ENCODE measurements at regions of chr14 and their contacts with region 1.

Region 1: GRCh38 chr14:34906287-34906686 is 31.1 kb upstream of the BAZ1A start:
- DNase-seq: no peak
- ATAC-seq: no peak
- H3K4me3 ChIP-seq: no peak overlapping the region
- H3K27ac ChIP-seq: no peak overlapping the region
- H3K4me1 ChIP-seq: no peaks in the 10 kb centered on the region
- H3K27me3 ChIP-seq: no peaks in the 10 kb centered on the region
- CTCF ChIP-seq: no peak

Region 2: GRCh38 chr14:34678306-34678705 is 228.0 kb before region 1 on chr14:
- CTCF ChIA-PET with region 1: interaction called, 11 read pairs
- POLR2A ChIA-PET with region 1: no interaction called
- in situ Hi-C with region 1: no loop called
- intact Hi-C with region 1: no loop called
- DNase-seq: no peak
- ATAC-seq: peak; percentile 33; the same call in 1 of the 2 replicates
- H3K4me3 ChIP-seq: peak overlapping the region in 1 of 2 experiments; percentile 10; a peak in 1 of 4 replicates
- H3K27ac ChIP-seq: peak overlapping the region; percentile 87
- H3K4me1 ChIP-seq: peaks cover 22% of the 10 kb centered on the region
- H3K27me3 ChIP-seq: no peaks in the 10 kb centered on the region
- CTCF ChIP-seq: no peak

Region 3: GRCh38 chr14:34857689-34858449 is 48.4 kb before region 1 on chr14:
- CTCF ChIA-PET with region 1: no interaction called
- POLR2A ChIA-PET with region 1: no interaction called
- in situ Hi-C with region 1: no loop called
- intact Hi-C with region 1: no loop called
- DNase-seq: no peak
- ATAC-seq: no peak
- H3K4me3 ChIP-seq: no peak overlapping the region
- H3K27ac ChIP-seq: no peak overlapping the region
- H3K4me1 ChIP-seq: no peaks in the 10 kb centered on the region
- H3K27me3 ChIP-seq: no peaks in the 10 kb centered on the region
- CTCF ChIP-seq: no peak

Region 4: GRCh38 chr14:34966413-34966812 is 60.1 kb after region 1 on chr14:
- CTCF ChIA-PET with region 1: no interaction called
- POLR2A ChIA-PET with region 1: interaction called, 10 read pairs
- in situ Hi-C with region 1: no loop called
- intact Hi-C with region 1: no loop called
- DNase-seq: no peak
- ATAC-seq: no peak
- H3K4me3 ChIP-seq: no peak overlapping the region
- H3K27ac ChIP-seq: no peak overlapping the region
- H3K4me1 ChIP-seq: no peaks in the 10 kb centered on the region
- H3K27me3 ChIP-seq: no peaks in the 10 kb centered on the region
- CTCF ChIP-seq: no peak

Region 5: GRCh38 chr14:35046048-35046741 is 139.9 kb after region 1 on chr14 and contains the start of gene FAM177A1:
- CTCF ChIA-PET with region 1: no interaction called
- POLR2A ChIA-PET with region 1: no interaction called
- in situ Hi-C with region 1: no loop called
- intact Hi-C with region 1: no loop called
- DNase-seq: peak; percentile 52
- ATAC-seq: peak; percentile 98
- H3K4me3 ChIP-seq: peak within 1 kb of the TSS; percentile 82 to 86
- H3K27ac ChIP-seq: peak within 1 kb of the TSS; percentile 93
- H3K4me1 ChIP-seq: no peaks in the 10 kb centered on the region; the same call in 1 of the 2 replicates
- H3K27me3 ChIP-seq: no peaks in the 10 kb centered on the region
- CTCF ChIP-seq: no peak
- total RNA-seq, gene FAM177A1: 46.7 TPM